Aorta (tissue), 5 donors: ENCODE measurements at regions of chr14 and their contacts with region 1.

Region 1: DNA sequence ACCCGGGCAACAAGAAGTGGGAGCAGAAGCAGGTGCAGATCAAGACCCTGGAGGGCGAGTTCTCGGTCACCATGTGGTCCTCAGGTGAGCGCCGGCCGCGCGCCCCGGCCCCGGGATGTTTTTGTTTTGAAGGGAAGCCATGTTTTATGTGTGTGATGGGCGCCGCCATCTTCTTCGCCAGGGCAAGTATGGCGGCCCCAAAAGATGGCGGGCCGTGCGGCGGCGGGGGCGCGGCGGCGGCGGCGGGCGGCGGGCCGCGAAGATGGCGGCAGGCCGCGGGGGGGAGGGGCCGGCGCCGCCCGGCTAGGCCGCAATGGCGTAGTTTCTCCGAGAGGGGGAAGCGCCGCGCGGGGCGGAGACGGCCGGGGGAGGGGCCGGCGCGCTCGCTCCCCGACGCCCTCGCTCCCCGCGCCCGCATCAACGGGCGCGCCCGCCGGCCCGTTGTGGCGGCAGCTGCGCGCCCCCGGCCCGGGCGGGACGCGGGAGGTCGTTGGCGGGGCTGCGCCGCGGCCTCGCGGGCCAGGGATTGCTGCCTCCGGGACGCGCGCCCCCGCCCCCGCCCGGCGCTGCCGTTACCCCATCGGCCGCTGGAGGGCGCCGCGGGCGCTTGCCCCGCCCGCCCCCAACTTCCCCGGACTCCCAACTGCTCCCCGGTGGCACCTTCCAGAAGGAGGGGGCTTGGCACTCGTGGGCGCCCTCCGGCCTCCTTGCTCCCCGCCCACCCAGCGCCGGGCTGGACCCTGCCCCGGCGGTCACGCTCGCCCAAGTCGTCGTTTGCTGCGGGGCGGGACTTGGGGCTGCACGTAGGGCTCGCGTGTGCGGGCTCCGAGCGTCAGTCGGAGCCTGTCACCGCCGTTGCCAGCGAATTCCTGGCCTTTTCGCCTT is 1.1 kb downstream of the YY1 start:
- DNase-seq: peak; percentile 93 to 96
- ATAC-seq: peak; percentile 85
- H3K4me3 ChIP-seq: peak overlapping the region; percentile 58 to 93
- H3K27ac ChIP-seq: peak overlapping the region; percentile 88 to 90
- H3K4me1 ChIP-seq: peaks cover 2 to 9% of the 10 kb centered on the region in 2 donors
- H3K27me3 ChIP-seq: no peaks in the 10 kb centered on the region

Region 2: DNA sequence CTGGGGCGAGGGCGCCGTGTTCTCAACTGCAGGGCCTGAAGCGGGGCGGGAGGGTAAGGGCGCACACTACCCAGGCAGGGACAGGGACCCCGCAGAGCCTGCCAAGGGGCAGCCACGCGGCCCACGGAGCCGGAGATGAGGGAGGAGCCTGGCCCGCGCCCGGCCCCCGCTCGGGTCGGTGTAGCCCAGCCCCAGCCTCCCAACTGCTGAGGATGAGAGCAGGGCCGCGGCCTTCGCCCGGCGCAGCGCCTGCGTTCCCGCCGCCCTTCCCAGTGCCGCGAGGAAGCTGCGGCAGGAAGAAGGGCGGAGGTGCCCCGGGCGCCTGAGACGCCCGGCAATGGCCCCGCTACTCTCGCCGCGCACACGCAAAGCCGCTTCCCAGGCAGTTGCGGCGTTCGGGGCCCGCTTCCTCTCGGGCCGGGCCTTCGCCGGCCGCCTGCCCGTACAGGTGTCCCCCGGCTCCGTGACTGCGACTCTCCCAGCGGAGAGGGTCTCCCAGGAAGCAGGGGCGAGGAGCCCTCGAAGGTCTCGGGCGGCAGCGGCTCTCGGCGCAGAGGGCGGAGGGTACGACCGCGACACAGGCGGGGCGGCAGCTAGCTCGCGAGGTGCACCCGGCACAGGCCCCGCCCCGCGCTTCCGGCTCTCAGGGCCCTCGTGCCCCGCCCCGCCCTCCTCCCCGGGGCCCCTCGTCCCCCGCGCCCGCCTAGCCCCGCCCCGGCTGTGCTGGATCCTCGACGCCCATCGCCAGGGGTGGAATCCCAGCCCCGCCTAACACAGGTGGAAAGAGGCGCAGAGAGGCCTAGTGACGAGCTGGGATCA is 25.9 kb before region 1 on chr14:
- intact Hi-C with region 1: loop called in 1 of 2 experiments (anchors 2 kb)
- DNase-seq: peak; percentile 93 to 97
- ATAC-seq: peak; percentile 95
- H3K4me3 ChIP-seq: peak overlapping the region; percentile 31 to 87
- H3K27ac ChIP-seq: peak overlapping the region; percentile 60 to 83
- H3K4me1 ChIP-seq: no peaks in the 10 kb centered on the region
- H3K27me3 ChIP-seq: no peaks in the 10 kb centered on the region

Region 3: GRCh38 chr14:100278702-100279101 is 38.6 kb after region 1 on chr14:
- intact Hi-C with region 1: loop called in 1 of 2 experiments (anchors 5 kb)
- DNase-seq: peak in 1 of 2 donors; percentile 32
- ATAC-seq: no peak
- H3K4me3 ChIP-seq: no peak overlapping the region
- H3K27ac ChIP-seq: no peak overlapping the region
- H3K4me1 ChIP-seq: no peaks in the 10 kb centered on the region
- H3K27me3 ChIP-seq: no peaks in the 10 kb centered on the region

Region 4: DNA sequence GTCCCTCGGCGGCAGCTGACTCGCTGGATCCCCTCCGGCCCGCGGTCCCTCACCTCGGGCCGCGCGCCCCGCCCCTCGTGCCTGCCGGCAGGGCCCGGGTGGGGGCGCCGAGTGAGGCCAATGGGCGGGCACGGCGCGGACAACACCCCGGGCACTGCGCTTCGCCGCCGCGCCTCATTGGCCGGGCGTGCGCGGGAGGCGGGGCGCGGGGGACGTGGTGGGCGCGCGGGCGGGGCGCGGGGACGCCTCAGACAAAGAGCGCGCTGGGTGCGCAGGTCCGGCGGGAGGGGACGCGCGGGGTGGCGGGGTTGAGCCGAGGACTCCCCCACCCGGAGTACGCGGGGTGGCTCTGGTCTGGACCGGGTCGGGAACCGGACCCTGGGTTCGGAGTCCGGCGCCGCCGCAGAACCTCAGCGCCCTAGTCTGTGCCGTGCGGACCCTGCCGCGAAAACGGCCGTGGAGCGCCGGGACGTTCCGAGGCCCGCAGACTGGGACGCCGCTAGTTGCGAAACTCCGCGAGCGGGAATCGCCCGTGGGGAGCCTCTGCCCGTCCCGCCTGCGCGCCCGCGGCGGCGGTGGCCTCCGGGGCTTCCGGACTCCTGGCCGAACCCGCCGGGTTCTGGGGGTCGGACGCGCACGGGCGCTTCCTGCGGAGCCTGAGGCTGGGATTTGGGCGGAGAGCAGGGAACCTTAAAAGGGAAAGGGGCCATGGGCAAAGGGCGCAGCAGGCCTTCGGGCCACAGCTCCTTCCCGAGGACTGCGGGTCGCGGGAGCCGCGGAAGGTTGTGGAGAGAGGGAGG is 66.5 kb after region 1 on chr14 and contains the start of gene SLC25A29:
- intact Hi-C with region 1: loop called in 1 of 2 experiments (anchors 5 kb)
- DNase-seq: peak; percentile 92 to 94
- ATAC-seq: peak; percentile 93
- H3K4me3 ChIP-seq: peak within 1 kb of the TSS; percentile 86 to 87
- H3K27ac ChIP-seq: peak within 1 kb of the TSS in 1 of 2 donors; percentile 39
- H3K4me1 ChIP-seq: no peaks in the 10 kb centered on the region
- H3K27me3 ChIP-seq: no peaks in the 10 kb centered on the region
- total RNA-seq, gene SLC25A29: 38.1 to 45.9 TPM

Region 5: DNA sequence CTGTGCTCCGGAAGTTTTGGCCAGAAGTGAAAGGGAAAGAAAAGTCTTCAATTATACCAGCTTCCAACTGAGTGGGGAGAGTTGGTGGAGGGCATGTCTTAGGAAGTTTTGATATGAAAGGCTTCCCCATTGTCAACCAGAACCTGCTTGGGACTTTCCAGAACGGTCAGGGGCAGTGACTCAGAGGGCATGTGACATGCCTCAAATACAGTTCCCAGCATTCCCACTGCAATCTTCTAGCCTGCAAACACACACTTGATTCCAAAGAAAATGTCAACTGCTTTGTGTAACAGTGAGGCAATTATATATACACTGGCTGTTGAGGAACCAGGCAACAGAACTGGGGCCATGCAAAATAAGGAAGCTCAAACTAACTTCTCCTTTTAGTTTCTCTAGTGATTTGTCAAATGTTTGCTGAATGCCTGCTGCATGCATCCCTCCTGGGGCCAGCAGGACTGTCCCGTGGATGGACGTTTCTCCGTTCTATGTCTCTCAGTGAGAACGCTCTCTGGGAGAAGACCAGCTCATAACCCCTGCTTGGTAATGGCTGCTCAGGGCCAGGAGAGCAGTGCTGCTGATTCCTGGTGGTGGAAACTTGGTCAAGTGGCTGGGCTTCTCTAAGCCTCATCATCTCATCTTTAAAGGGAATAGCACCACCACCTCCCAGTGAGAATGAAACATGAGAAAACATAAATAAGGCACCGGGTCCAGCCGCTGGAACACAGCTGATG is 101.4 kb after region 1 on chr14:
- intact Hi-C with region 1: no loop called
- DNase-seq: peak; percentile 44 to 81
- ATAC-seq: peak; percentile 93
- H3K4me3 ChIP-seq: no peak overlapping the region
- H3K27ac ChIP-seq: peak overlapping the region; percentile 85 to 96
- H3K4me1 ChIP-seq: peaks cover 0 to 4% of the 10 kb centered on the region in 2 donors
- H3K27me3 ChIP-seq: no peaks in the 10 kb centered on the region

Region 6: DNA sequence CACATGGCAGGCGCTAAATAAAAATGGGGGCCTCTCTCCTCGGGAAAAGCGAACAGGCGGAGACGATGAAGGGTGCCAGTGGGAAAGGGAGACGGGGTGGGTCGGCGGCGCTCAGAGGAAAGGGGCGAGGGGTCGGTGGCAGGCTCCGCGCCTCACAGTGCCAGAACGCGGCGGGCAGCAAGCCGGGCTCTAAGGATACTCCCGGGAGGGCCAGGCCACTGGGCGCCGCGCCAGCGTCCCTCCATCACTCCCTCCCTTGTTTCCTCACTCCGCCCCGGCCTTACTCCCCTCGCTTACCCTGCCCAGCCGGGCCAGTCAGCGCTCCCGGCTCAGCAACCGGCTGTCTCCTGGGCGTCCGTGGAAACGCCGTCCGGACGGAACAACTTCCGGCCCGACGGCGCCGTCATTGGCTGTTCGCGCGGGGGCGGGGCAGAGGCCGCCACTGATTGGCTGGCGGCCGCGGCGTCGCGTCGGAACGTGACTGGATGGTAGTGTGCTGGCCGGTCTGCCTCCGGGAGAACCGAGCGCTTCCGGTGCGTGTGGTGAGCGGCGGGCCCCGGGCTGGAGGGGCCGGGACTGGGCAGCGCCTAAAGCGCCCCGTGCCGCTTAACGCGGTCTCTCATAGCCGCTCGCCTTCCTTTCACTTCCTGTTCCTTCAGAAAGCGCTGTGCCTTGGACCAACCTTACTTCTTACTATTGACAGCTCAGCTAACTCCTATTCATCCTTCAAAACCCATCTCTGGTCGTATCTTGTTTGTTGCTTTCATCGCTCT is 136.1 kb after region 1 on chr14:
- intact Hi-C with region 1: loop called (anchors 2 to 10 kb)
- DNase-seq: peak; percentile 96 to 97
- ATAC-seq: peak; percentile 98
- H3K4me3 ChIP-seq: peak within 1 kb of the TSS; percentile 46 to 63
- H3K27ac ChIP-seq: peak within 1 kb of the TSS; percentile 66 to 86
- H3K4me1 ChIP-seq: peaks cover 0 to 4% of the 10 kb centered on the region in 2 donors
- H3K27me3 ChIP-seq: no peaks in the 10 kb centered on the region